Aorta (tissue), 5 donors: ENCODE measurements at regions of chr12 and their contacts with region 1.

Region 1: GRCh38 chr12:19288603-19289244 is 150.6 kb upstream of the AEBP2 start:
- DNase-seq: no peak
- ATAC-seq: no peak
- H3K4me3 ChIP-seq: no peak overlapping the region
- H3K27ac ChIP-seq: no peak overlapping the region
- H3K4me1 ChIP-seq: no peaks in the 10 kb centered on the region
- H3K27me3 ChIP-seq: no peaks in the 10 kb centered on the region

Region 2: GRCh38 chr12:19110221-19110940 is 178.3 kb before region 1 on chr12:
- intact Hi-C with region 1: no loop called
- DNase-seq: no peak
- ATAC-seq: no peak
- H3K4me3 ChIP-seq: no peak overlapping the region
- H3K27ac ChIP-seq: no peak overlapping the region
- H3K4me1 ChIP-seq: no peaks in the 10 kb centered on the region
- H3K27me3 ChIP-seq: no peaks in the 10 kb centered on the region

Region 3: DNA sequence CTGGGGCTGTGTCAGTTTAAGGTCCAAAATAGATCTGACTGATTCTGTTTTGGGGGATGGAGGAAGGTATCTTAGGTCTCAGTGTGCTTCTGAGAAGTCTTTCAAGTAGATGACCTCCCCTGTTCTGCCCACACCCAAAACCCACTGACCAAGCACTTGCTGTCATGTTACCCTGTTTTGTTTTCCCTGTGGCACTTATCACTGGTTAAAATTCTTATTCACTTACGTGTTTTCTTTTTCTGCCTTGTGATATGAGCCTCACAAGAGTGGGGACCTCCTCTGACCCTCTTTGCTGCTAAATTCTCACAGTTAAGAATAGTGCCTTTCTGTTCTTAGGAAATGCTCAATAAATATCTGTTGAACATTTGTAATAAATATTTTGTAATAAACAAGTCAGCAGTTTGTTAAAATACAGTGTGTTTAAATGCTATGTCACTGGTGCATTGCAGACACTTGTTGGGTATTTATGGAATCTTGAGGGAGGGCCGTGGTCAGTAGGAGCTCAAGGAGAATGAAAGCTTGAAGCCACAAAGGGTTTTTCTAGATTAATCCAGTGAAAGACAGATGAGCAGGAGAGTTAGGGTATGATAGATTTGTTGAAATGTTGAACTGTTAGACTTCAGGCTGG is 138.3 kb before region 1 on chr12:
- intact Hi-C with region 1: no loop called
- DNase-seq: no peak
- ATAC-seq: no peak
- H3K4me3 ChIP-seq: no peak overlapping the region
- H3K27ac ChIP-seq: peak overlapping the region; percentile 57 to 76
- H3K4me1 ChIP-seq: peaks cover 0 to 11% of the 10 kb centered on the region in 2 donors
- H3K27me3 ChIP-seq: no peaks in the 10 kb centered on the region

Region 4: DNA sequence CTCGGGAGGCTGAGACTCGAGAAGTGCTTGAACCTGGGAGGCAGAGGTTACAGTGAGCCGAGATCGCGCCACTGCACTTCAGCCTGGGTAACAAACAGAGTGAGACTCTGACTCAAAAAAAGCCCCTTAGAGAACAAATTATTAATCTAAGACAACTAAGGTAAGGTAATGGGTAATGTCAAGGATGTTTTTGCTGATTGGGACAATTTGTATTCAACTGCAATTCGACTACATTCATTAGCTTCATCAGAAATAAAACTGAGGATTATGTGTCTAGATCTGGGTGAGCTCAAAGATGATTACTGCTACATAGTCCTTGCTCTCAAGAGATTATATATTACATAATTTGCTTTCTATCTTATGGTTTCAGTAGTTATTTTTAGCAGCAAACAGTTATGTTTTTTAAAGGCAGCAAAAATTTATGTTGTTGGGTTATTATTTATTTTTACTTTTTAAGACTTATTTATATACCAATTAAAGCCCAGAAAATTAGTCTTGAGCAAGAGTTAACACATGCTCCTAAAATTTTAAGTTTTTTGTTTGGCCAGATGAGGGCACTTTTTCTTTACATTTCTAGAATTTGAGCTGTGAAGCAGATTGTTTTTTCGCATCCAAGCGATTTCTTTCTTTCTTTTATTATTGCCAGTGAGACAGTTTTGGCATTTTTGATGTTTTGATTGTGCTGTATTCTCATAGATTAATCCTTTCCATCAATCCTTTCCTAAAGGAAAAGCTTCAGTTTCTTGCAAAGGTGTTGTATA is 106.9 kb before region 1 on chr12:
- intact Hi-C with region 1: loop called (anchors 5 kb)
- DNase-seq: no peak
- ATAC-seq: no peak
- H3K4me3 ChIP-seq: no peak overlapping the region
- H3K27ac ChIP-seq: no peak overlapping the region
- H3K4me1 ChIP-seq: no peaks in the 10 kb centered on the region
- H3K27me3 ChIP-seq: no peaks in the 10 kb centered on the region